ENCODE measurements at regions of chr4 and their contacts with region 1.

Region 1: GRCh38 chr4:169010125-169011023 is at the start of gene CBR4:
- DNase-seq: peak; percentile 97
- H3K4me3 Mint-ChIP-seq: peak within 1 kb of the TSS; percentile 75
- H3K27ac Mint-ChIP-seq: peak within 1 kb of the TSS; percentile 86
- H3K4me1 Mint-ChIP-seq: peaks cover 15% of the 10 kb centered on the region
- H3K27me3 Mint-ChIP-seq: no peaks in the 10 kb centered on the region
- total RNA-seq, gene CBR4: 22.9 to 24.3 TPM

Region 2: GRCh38 chr4:168183717-168184608 is 826.4 kb before region 1 on chr4:
- CTCF ChIA-PET with region 1: no interaction called
- intact Hi-C with region 1: loop called (anchors 10 kb)
- DNase-seq: no peak
- H3K4me3 Mint-ChIP-seq: no peak overlapping the region
- H3K27ac Mint-ChIP-seq: no peak overlapping the region
- H3K4me1 Mint-ChIP-seq: no peaks in the 10 kb centered on the region
- H3K27me3 Mint-ChIP-seq: no peaks in the 10 kb centered on the region

Region 3: GRCh38 chr4:168514249-168514852 is 496.0 kb before region 1 on chr4:
- CTCF ChIA-PET with region 1: interaction called, 5 read pairs
- intact Hi-C with region 1: loop called (anchors 1 kb)
- DNase-seq: no peak
- H3K4me3 Mint-ChIP-seq: no peak overlapping the region
- H3K27ac Mint-ChIP-seq: no peak overlapping the region
- H3K4me1 Mint-ChIP-seq: peaks cover 32% of the 10 kb centered on the region
- H3K27me3 Mint-ChIP-seq: no peaks in the 10 kb centered on the region

Region 4: DNA sequence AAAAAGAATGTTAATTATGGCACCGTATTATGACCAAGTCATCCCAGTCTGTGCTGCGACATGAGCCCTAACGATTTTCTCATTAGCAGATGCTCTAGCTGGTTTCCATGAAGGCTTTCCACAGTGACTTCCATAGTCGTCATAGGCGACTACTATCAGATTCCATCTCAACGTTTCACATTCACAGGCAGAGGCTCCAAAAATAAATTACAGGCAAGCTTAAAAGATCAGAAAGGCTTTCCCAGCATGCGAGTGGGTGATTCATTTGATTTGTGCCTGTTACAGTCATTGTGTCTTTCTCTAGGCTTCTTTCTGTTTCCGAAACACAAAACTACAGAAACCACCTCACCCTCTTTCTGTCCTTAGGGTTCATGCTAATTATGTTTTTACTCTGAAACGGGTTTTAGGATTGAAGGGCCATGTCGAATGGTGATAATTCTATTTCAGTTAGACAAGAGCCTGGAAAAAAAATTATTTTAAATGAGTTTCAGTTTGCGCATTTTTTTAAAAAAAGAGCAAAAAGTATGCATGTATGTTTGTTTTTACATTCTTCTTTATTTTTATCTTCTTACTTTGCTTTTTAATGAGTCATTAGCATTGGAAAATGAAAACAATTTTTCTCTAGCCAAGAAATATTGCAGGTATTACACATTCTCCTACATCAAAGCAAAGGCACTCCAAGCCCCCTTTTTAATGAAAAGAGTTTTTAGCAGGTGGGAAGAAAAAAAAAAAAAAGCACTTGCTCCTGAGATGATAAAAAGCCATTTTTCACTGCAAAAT is 470.1 kb before region 1 on chr4:
- CTCF ChIA-PET with region 1: no interaction called
- intact Hi-C with region 1: no loop called
- DNase-seq: peak; percentile 31
- H3K4me3 Mint-ChIP-seq: no peak overlapping the region
- H3K27ac Mint-ChIP-seq: no peak overlapping the region
- H3K4me1 Mint-ChIP-seq: peaks cover 9% of the 10 kb centered on the region
- H3K27me3 Mint-ChIP-seq: peaks cover 7% of the 10 kb centered on the region

Region 5: DNA sequence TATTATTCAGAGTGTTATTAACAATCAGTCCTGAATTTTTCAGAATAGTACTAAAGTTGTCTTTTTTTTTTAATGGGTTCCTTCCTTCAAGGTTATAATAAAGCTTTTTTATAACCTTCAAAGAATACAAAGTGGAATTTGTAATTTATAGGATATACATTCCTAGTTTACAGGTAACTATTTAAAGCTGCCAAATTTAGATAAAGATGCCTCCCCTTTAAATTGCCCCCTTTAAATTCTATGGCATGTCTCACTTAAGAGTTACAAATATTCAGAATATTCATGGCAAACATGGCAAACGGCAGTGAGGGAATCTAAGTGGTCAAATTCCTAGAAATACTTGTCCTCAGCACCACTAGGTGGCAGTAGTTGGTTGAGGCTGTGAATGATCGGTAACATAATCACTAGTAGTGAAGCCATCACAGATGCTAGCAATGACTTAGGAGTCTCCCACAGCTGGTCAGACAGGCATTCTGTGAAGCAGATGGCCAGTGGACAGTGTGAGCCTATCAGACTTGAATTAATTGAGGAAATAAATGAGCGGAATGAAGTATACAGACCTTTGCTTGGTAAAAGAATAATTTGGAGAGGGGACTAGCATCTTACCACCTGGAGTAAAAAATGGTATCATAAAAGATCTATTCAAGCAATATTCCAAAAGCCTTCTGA is 86.7 kb before region 1 on chr4:
- CTCF ChIA-PET with region 1: interaction called, 12 read pairs
- intact Hi-C with region 1: loop called (anchors 1 kb)
- DNase-seq: peak; percentile 73
- H3K4me3 Mint-ChIP-seq: no peak overlapping the region
- H3K27ac Mint-ChIP-seq: no peak overlapping the region
- H3K4me1 Mint-ChIP-seq: peaks cover 2% of the 10 kb centered on the region
- H3K27me3 Mint-ChIP-seq: no peaks in the 10 kb centered on the region

Region 6: GRCh38 chr4:169410839-169411770 is 400.7 kb after region 1 on chr4:
- CTCF ChIA-PET with region 1: no interaction called
- intact Hi-C with region 1: loop called (anchors 1 kb)
- DNase-seq: peak; percentile 83
- H3K4me3 Mint-ChIP-seq: no peak overlapping the region
- H3K27ac Mint-ChIP-seq: peak overlapping the region; percentile 71
- H3K4me1 Mint-ChIP-seq: peaks cover 25% of the 10 kb centered on the region
- H3K27me3 Mint-ChIP-seq: no peaks in the 10 kb centered on the region

Region 7: GRCh38 chr4:169612871-169613859 is 602.8 kb after region 1 on chr4:
- CTCF ChIA-PET with region 1: no interaction called
- intact Hi-C with region 1: loop called (anchors 1 kb)
- DNase-seq: peak; percentile 81
- H3K4me3 Mint-ChIP-seq: peak overlapping the region; percentile 87
- H3K27ac Mint-ChIP-seq: peak overlapping the region; percentile 92
- H3K4me1 Mint-ChIP-seq: peaks cover 42% of the 10 kb centered on the region
- H3K27me3 Mint-ChIP-seq: no peaks in the 10 kb centered on the region

Region 8: DNA sequence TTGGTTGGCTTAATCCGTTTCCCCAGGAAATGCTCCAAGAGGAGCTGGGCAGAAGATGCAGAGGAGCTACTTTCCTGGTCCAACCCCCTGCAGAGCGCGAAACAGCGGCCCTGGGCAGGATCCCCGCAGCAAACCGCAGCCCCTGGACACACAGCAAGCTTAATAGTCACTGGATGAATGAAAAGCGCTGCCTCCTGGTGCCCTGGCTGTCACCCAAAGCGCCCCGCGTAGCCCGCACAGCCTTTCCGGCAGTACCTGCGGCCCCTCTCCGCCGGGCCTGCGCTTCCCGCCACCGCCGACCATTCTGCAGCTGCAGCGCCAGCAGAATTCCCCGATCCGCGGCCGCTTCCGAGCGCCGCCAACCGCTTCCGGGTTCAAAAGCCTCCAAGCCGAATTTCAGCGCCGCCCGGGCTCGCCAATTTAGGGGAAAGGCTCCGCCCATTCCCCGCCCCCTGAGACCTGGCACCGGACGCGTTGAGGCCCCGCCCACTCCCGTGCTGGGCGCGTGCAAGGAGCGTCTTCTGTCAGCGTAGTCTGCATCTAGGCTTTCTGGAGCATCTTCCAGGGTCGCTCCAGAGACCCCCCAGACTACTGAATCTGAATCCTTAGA is 747.3 kb after region 1 on chr4 and contains the start of gene HPF1:
- CTCF ChIA-PET with region 1: no interaction called
- intact Hi-C with region 1: loop called (anchors 1 kb)
- DNase-seq: peak; percentile 97
- H3K4me3 Mint-ChIP-seq: peak within 1 kb of the TSS; percentile 83
- H3K27ac Mint-ChIP-seq: peak within 1 kb of the TSS; percentile 81
- H3K4me1 Mint-ChIP-seq: peaks cover 21% of the 10 kb centered on the region
- H3K27me3 Mint-ChIP-seq: no peaks in the 10 kb centered on the region
- total RNA-seq, gene HPF1: 35.7 to 36.6 TPM

Measured in activated naive CD4-positive, alpha-beta T cell treated with anti-CD3 and anti-CD28 coated beads for 36 hours (primary cell).